ENCODE measurements at regions of chr5 and their contacts with region 1.

Region 1: GRCh38 chr5:172666251-172666650 is 25.2 kb downstream of the NEURL1B start:
- DNase-seq: peak; percentile 55
- ATAC-seq: peak; percentile 90
- H3K4me3 Mint-ChIP-seq: no peak overlapping the region
- H3K27ac Mint-ChIP-seq: peak overlapping the region; percentile 48; the same call in 1 of the 2 replicates
- H3K4me1 Mint-ChIP-seq: peaks cover 2% of the 10 kb centered on the region
- H3K27me3 Mint-ChIP-seq: no peaks in the 10 kb centered on the region
- CTCF ChIP-seq: no peak

Region 2: GRCh38 chr5:172646716-172647285 is 19.4 kb before region 1 on chr5:
- CTCF ChIA-PET with region 1: interaction called, 27 read pairs
- POLR2A ChIA-PET with region 1: interaction called, 3 read pairs
- DNase-seq: peak; percentile 62
- ATAC-seq: peak; percentile 85
- H3K4me3 Mint-ChIP-seq: no peak overlapping the region; the same call in 1 of the 2 replicates
- H3K27ac Mint-ChIP-seq: peak overlapping the region; percentile 55; the same call in 1 of the 2 replicates
- H3K4me1 Mint-ChIP-seq: peaks cover 51% of the 10 kb centered on the region
- H3K27me3 Mint-ChIP-seq: peaks cover 17% of the 10 kb centered on the region
- CTCF ChIP-seq: peak; percentile 24; the same call in 1 of the 2 replicates

Region 3: GRCh38 chr5:172683696-172684471 is 17.6 kb after region 1 on chr5:
- CTCF ChIA-PET with region 1: interaction called, 21 read pairs
- POLR2A ChIA-PET with region 1: interaction called, 3 read pairs
- DNase-seq: peak; percentile 62
- ATAC-seq: peak; percentile 68
- H3K4me3 Mint-ChIP-seq: peak overlapping the region; percentile 62
- H3K27ac Mint-ChIP-seq: no peak overlapping the region
- H3K4me1 Mint-ChIP-seq: peaks cover 14% of the 10 kb centered on the region
- H3K27me3 Mint-ChIP-seq: peaks cover 30% of the 10 kb centered on the region
- CTCF ChIP-seq: no peak

Region 4: GRCh38 chr5:172697123-172698121 is 31.2 kb after region 1 on chr5:
- CTCF ChIA-PET with region 1: interaction called, 100 read pairs
- POLR2A ChIA-PET with region 1: interaction called, 5 read pairs
- DNase-seq: peak; percentile 89
- ATAC-seq: peak; percentile 60
- H3K4me3 Mint-ChIP-seq: peak overlapping the region; percentile 66
- H3K27ac Mint-ChIP-seq: no peak overlapping the region
- H3K4me1 Mint-ChIP-seq: peaks cover 47% of the 10 kb centered on the region
- H3K27me3 Mint-ChIP-seq: peaks cover 32% of the 10 kb centered on the region
- CTCF ChIP-seq: peak; percentile 85

Region 5: DNA sequence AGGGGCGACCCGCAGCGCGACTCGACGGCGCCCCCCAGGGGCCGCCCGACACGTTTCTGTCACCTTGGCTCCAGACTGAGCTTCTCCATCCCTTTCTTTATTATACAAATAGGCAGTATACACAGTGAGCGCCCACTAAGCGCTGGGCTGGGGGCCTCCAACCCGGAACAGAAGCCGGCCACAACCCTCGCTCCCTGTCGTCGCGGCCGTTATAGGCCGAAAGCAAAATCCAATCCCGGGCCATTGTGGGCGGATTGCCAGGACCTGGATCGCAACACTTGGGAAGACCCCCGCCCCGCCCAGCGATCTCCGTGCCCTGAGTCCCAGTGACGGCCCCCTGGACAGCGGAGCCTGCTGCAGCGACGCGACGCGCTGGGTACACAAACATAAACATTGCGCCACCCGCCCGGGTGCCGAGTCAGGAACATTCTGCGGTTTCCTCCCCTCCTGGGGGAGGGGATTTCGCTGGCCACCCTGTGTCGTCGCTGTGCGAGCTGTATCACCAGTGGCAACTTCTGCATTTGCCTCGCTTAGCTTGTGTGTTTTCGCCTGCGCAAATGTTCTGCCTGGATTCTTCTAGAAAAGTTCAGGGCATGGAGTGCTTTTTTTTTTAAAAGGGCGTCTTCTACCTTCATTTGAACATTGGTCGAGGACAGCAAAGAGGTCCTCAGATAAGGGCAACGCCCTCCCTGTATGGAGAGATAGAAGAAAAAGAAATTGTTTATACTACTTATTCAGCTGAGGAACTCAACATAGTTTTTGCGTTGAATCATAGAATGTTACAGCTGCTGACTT is 106.1 kb after region 1 on chr5:
- CTCF ChIA-PET with region 1: no interaction called
- POLR2A ChIA-PET with region 1: no interaction called
- DNase-seq: peak; percentile 80
- ATAC-seq: peak; percentile 62
- H3K4me3 Mint-ChIP-seq: peak overlapping the region; percentile 81
- H3K27ac Mint-ChIP-seq: no peak overlapping the region
- H3K4me1 Mint-ChIP-seq: peaks cover 17% of the 10 kb centered on the region
- H3K27me3 Mint-ChIP-seq: peaks cover 39% of the 10 kb centered on the region
- CTCF ChIP-seq: peak; percentile 86

Measured in WTC11 (cell line).